H1 (cell line): ENCODE measurements at regions of chr14 and their contacts with region 1.

Region 1: DNA sequence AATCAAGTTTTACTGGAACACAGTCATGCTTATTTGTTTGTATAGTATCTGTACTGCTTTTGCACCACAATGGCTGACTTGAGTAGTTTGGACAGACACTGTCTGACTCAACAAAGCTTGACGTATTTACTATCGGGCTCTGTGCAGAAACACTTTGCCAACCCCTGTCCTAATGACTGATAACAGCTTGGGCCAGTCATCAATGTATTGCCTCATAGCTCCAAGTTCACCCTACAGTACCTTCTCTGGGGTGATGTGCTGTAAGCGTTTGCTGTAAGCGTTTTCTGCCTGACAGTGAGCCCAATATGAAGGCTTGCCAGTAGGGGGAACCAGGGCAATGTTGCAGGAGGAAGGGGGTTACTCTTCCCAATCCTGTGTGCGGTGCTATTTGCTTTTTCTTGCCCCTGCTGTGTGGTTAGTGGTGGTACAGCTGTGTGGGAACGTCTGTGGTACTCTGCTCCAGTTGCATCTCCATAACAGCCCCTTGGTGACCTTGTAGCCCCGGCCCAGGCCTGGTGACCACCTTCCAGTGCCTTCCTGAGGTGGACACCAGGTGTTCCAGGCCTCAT is 5.4 kb upstream of the CCDC177 start:
- DNase-seq: peak in 1 of 2 experiments; percentile 76
- H3K4me3 ChIP-seq: no peak overlapping the region
- H3K27ac ChIP-seq: no peak overlapping the region; the same call in 1 of the 2 replicates
- H3K4me1 ChIP-seq: peaks cover 0 to 4% (median 0%) of the 10 kb centered on the region in 4 experiments; a peak in 1 of 7 replicates
- H3K27me3 ChIP-seq: no peaks in the 10 kb centered on the region; a peak in 2 of 7 replicates
- CTCF ChIP-seq: peak; percentile 90 to 95 (median 92)
- EP300 ChIP-seq: no peak
- POLR2A ChIP-seq: no peak
- RAD21 ChIP-seq: peak; percentile 70 to 76

Region 2: GRCh38 chr14:69535230-69535848 is 44.8 kb before region 1 on chr14:
- CTCF ChIA-PET with region 1: interaction called, 79 read pairs
- POLR2A ChIA-PET with region 1: interaction called, 3 read pairs
- DNase-seq: peak in 1 of 2 experiments; percentile 71
- H3K4me3 ChIP-seq: no peak overlapping the region
- H3K27ac ChIP-seq: no peak overlapping the region
- H3K4me1 ChIP-seq: no peaks in the 10 kb centered on the region
- H3K27me3 ChIP-seq: no peaks in the 10 kb centered on the region
- CTCF ChIP-seq: peak; percentile 73 to 91 (median 83)
- EP300 ChIP-seq: no peak
- POLR2A ChIP-seq: no peak
- RAD21 ChIP-seq: peak; percentile 83 to 85

Region 3: GRCh38 chr14:69559581-69560011 is 20.5 kb before region 1 on chr14:
- CTCF ChIA-PET with region 1: interaction called, 28 read pairs
- POLR2A ChIA-PET with region 1: no interaction called
- DNase-seq: no peak
- H3K4me3 ChIP-seq: no peak overlapping the region
- H3K27ac ChIP-seq: no peak overlapping the region
- H3K4me1 ChIP-seq: no peaks in the 10 kb centered on the region; a peak in 1 of 7 replicates
- H3K27me3 ChIP-seq: no peaks in the 10 kb centered on the region
- CTCF ChIP-seq: no peak
- EP300 ChIP-seq: no peak
- POLR2A ChIP-seq: no peak
- RAD21 ChIP-seq: no peak

Region 4: GRCh38 chr14:69600304-69600891 is 20.3 kb after region 1 on chr14:
- CTCF ChIA-PET with region 1: interaction called, 33 read pairs
- POLR2A ChIA-PET with region 1: no interaction called
- DNase-seq: no peak
- H3K4me3 ChIP-seq: no peak overlapping the region
- H3K27ac ChIP-seq: no peak overlapping the region
- H3K4me1 ChIP-seq: peaks cover 0 to 4% (median under 1%) of the 10 kb centered on the region in 4 experiments; a peak in 2 of 7 replicates
- H3K27me3 ChIP-seq: no peaks in the 10 kb centered on the region
- CTCF ChIP-seq: no peak
- EP300 ChIP-seq: no peak
- POLR2A ChIP-seq: no peak
- RAD21 ChIP-seq: no peak

Region 5: GRCh38 chr14:69715725-69716477 is 135.8 kb after region 1 on chr14:
- CTCF ChIA-PET with region 1: interaction called, 24 read pairs
- POLR2A ChIA-PET with region 1: no interaction called
- DNase-seq: no peak
- H3K4me3 ChIP-seq: no peak overlapping the region
- H3K27ac ChIP-seq: no peak overlapping the region
- H3K4me1 ChIP-seq: peaks cover 16 to 39% (median 31%) of the 10 kb centered on the region in 4 experiments
- H3K27me3 ChIP-seq: no peaks in the 10 kb centered on the region
- CTCF ChIP-seq: no peak
- EP300 ChIP-seq: no peak
- POLR2A ChIP-seq: no peak
- RAD21 ChIP-seq: no peak